ENCODE measurements at regions of chr3 and their contacts with region 1.

Region 1: DNA sequence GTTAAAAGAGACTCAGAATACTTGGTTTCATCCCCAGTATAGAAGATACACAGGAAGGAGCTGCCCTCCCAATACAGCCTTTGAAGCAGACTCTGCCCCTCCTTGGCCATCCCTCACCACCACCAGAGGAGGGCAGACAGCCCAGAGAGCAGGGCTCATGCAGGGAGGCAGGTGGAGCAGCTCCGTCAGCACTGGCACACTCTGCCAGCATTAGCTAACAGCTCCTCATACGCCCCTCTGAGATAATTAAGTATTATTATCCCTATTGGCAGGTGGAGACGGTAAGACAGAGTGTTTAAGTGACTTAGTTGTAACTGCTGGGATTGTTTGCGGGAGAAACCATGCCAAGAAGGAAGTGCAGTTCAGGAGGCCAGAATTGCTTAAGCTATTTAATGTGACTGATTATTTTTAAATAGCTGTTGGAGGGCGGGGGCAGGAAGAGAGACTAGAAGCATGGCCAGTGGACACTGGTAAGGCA is 434.0 kb downstream of the EPHB1 start:
- DNase-seq: no peak
- H3K4me3 ChIP-seq: no peak overlapping the region
- H3K27ac ChIP-seq: no peak overlapping the region
- H3K4me1 ChIP-seq: peaks cover 2 to 9% (median 5%) of the 10 kb centered on the region in 4 experiments; a peak in 6 of 7 replicates
- H3K27me3 ChIP-seq: no peaks in the 10 kb centered on the region
- CTCF ChIP-seq: peak; percentile 53 to 70 (median 62)
- EP300 ChIP-seq: no peak
- POLR2A ChIP-seq: no peak
- RAD21 ChIP-seq: peak; percentile 47 to 67

Region 2: GRCh38 chr3:135218782-135219551 is 10.1 kb before region 1 on chr3:
- CTCF ChIA-PET with region 1: interaction called, 8 read pairs
- POLR2A ChIA-PET with region 1: interaction called, 12 read pairs
- DNase-seq: no peak
- H3K4me3 ChIP-seq: no peak overlapping the region
- H3K27ac ChIP-seq: no peak overlapping the region
- H3K4me1 ChIP-seq: peaks cover 2 to 20% (median 16%) of the 10 kb centered on the region in 4 experiments; a peak in 5 of 7 replicates
- H3K27me3 ChIP-seq: no peaks in the 10 kb centered on the region; a peak in 1 of 7 replicates
- CTCF ChIP-seq: no peak
- EP300 ChIP-seq: no peak
- POLR2A ChIP-seq: no peak
- RAD21 ChIP-seq: no peak

Region 3: DNA sequence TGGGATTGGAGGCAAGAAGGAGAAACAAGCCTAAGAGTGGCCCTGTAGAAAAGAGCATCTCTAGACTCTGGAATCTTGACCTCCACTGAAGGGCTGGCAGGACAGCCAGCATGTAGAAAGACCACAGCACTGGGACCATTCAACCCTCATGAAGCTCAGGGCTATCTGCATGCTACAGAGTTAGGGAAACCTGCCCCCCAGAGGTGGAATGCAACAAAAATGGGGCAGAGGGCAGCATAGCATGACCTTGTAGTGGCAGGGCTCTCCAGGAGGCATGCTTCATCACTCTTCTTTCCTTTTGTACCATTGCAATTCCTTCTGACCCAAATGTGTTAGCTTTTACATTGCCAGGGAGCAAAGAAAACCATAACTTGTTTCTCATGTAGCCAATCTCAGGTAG is 11.4 kb after region 1 on chr3:
- CTCF ChIA-PET with region 1: interaction called, 41 read pairs
- POLR2A ChIA-PET with region 1: interaction called, 6 read pairs
- DNase-seq: no peak
- H3K4me3 ChIP-seq: no peak overlapping the region
- H3K27ac ChIP-seq: no peak overlapping the region
- H3K4me1 ChIP-seq: peaks cover 0 to 7% (median 0%) of the 10 kb centered on the region in 4 experiments; a peak in 3 of 7 replicates
- H3K27me3 ChIP-seq: no peaks in the 10 kb centered on the region; a peak in 1 of 7 replicates
- CTCF ChIP-seq: peak; percentile 60 to 66 (median 64)
- EP300 ChIP-seq: no peak
- POLR2A ChIP-seq: no peak
- RAD21 ChIP-seq: peak; percentile 75 to 84

Region 4: DNA sequence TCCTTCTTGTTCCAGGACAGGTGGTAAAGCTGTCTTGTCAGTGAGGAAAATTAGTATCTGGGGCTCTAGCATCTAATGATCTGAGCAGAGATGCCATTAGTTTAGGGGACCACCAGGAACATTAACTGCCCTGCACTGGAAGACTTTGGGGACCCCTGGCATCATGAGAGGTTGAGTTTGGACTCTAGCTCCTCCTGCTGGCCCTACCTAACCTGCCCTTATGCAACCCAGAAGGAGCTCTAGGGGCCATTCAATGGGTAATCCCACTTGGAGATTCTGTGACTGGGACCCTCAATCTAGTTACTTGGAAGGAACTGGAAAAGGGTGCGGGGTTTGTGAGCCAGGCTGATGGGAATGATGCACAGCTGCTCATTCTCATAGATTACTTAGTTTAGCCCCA is 17.0 kb after region 1 on chr3:
- CTCF ChIA-PET with region 1: interaction called, 41 read pairs
- POLR2A ChIA-PET with region 1: interaction called, 6 read pairs
- DNase-seq: no peak
- H3K4me3 ChIP-seq: no peak overlapping the region
- H3K27ac ChIP-seq: no peak overlapping the region
- H3K4me1 ChIP-seq: no peaks in the 10 kb centered on the region; a peak in 1 of 7 replicates
- H3K27me3 ChIP-seq: no peaks in the 10 kb centered on the region
- CTCF ChIP-seq: peak; percentile 39 to 59 (median 49)
- EP300 ChIP-seq: no peak
- POLR2A ChIP-seq: no peak
- RAD21 ChIP-seq: peak; percentile 56 to 69